ENCODE measurements at regions of chr3 and their contacts with region 1.

Region 1: DNA sequence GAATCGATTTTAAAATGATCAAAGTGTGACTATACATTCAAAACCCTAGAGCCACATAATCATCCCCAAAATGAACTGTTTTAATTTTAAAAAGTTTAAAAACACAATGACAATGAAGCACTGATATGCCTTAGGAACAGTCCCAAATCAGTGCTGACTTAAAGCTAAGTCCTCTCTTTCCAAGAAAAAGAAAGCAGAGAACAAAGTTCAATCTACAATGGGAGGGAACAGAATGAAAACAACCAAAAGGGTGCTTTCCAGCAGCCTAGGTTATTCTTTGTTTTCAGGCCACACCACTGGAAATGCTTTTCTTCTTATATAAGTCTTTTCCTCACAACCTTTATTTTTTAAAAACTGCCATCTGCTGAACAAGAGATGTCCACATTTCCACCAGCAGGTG is 7.2 kb upstream of the STIMATE start:
- DNase-seq: no peak
- H3K4me3 ChIP-seq: no peak overlapping the region
- H3K27ac ChIP-seq: no peak overlapping the region
- H3K4me1 ChIP-seq: no peaks in the 10 kb centered on the region
- H3K27me3 ChIP-seq: no peaks in the 10 kb centered on the region
- CTCF ChIP-seq: no peak
- EP300 ChIP-seq: no peak
- POLR2A ChIP-seq: no peak

Region 2: GRCh38 chr3:52606373-52607085 is 298.0 kb before region 1 on chr3:
- intact Hi-C with region 1: no loop called
- DNase-seq: no peak
- H3K4me3 ChIP-seq: no peak overlapping the region
- H3K27ac ChIP-seq: no peak overlapping the region
- H3K4me1 ChIP-seq: no peaks in the 10 kb centered on the region
- H3K27me3 ChIP-seq: no peaks in the 10 kb centered on the region
- CTCF ChIP-seq: no peak
- EP300 ChIP-seq: no peak
- POLR2A ChIP-seq: no peak

Region 3: GRCh38 chr3:52856666-52857065 is 47.9 kb before region 1 on chr3:
- intact Hi-C with region 1: loop called in 1 of 4 experiments (anchors 2 kb)
- DNase-seq: no peak
- H3K4me3 ChIP-seq: no peak overlapping the region
- H3K27ac ChIP-seq: no peak overlapping the region
- H3K4me1 ChIP-seq: no peaks in the 10 kb centered on the region
- H3K27me3 ChIP-seq: no peaks in the 10 kb centered on the region
- CTCF ChIP-seq: no peak
- EP300 ChIP-seq: no peak
- POLR2A ChIP-seq: no peak

Region 4: GRCh38 chr3:52962160-52962559 is 57.6 kb after region 1 on chr3:
- intact Hi-C with region 1: no loop called
- DNase-seq: no peak
- H3K4me3 ChIP-seq: no peak overlapping the region
- H3K27ac ChIP-seq: no peak overlapping the region
- H3K4me1 ChIP-seq: no peaks in the 10 kb centered on the region
- H3K27me3 ChIP-seq: no peaks in the 10 kb centered on the region
- CTCF ChIP-seq: no peak
- EP300 ChIP-seq: no peak
- POLR2A ChIP-seq: no peak

Region 5: GRCh38 chr3:53416530-53416929 is 512.0 kb after region 1 on chr3:
- intact Hi-C with region 1: no loop called
- DNase-seq: no peak
- H3K4me3 ChIP-seq: no peak overlapping the region
- H3K27ac ChIP-seq: no peak overlapping the region
- H3K4me1 ChIP-seq: no peaks in the 10 kb centered on the region
- H3K27me3 ChIP-seq: no peaks in the 10 kb centered on the region
- CTCF ChIP-seq: no peak
- EP300 ChIP-seq: no peak
- POLR2A ChIP-seq: no peak